PC-3 (cell line): ENCODE measurements at regions of chr9 and their contacts with region 1.

Region 1: GRCh38 chr9:28927711-28928110 is 1354.4 kb upstream of the C9orf72 start:
- DNase-seq: peak; percentile 96
- ATAC-seq: peak; percentile 82
- H3K4me3 ChIP-seq: no peak overlapping the region
- H3K27ac ChIP-seq: peak overlapping the region; percentile 98
- H3K4me1 ChIP-seq: peaks cover 74% of the 10 kb centered on the region
- H3K27me3 ChIP-seq: no peaks in the 10 kb centered on the region
- CTCF ChIP-seq: no peak

Region 2: GRCh38 chr9:28810375-28811075 is 117.2 kb before region 1 on chr9:
- CTCF ChIA-PET with region 1: no interaction called
- POLR2A ChIA-PET with region 1: no interaction called
- intact Hi-C with region 1: loop called (anchors 5 kb)
- DNase-seq: peak; percentile 79
- ATAC-seq: peak; percentile 92
- H3K4me3 ChIP-seq: no peak overlapping the region
- H3K27ac ChIP-seq: peak overlapping the region; percentile 85
- H3K4me1 ChIP-seq: peaks cover 28% of the 10 kb centered on the region
- H3K27me3 ChIP-seq: no peaks in the 10 kb centered on the region
- CTCF ChIP-seq: no peak

Region 3: DNA sequence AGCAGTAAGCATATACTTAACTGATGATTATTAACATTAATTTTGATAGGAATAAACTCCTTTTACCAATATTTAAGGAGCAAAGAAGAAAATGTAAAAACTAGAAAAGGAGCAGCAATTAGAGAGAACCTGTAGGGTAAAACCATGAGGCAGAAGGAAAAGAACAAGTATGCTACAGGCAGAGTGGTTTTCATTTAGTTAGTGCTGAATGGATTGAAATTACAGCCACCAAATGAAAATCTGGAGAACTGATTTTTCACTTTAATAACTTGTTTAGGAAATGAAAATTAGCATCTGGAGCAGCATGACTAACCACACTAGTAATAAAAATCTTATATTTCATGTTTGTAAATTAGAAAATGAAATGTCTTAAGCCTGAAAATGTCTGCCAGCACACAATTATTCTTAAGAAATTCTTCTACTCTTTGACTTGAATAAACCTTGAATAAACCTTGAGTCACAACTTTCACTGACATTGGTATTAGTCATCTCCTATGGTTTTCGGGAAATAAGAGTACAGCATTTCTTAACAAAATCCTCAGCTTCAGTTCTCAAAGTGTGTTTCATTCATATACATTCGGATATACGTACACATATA is 150.5 kb after region 1 on chr9:
- CTCF ChIA-PET with region 1: no interaction called
- POLR2A ChIA-PET with region 1: no interaction called
- intact Hi-C with region 1: loop called (anchors 5 kb)
- DNase-seq: peak; percentile 84
- ATAC-seq: peak; percentile 93
- H3K4me3 ChIP-seq: peak overlapping the region; percentile 38; the same call in 1 of the 2 replicates
- H3K27ac ChIP-seq: peak overlapping the region; percentile 92
- H3K4me1 ChIP-seq: peaks cover 23% of the 10 kb centered on the region
- H3K27me3 ChIP-seq: no peaks in the 10 kb centered on the region
- CTCF ChIP-seq: no peak